ENCODE measurements at regions of chr10 and their contacts with region 1.

Region 1: DNA sequence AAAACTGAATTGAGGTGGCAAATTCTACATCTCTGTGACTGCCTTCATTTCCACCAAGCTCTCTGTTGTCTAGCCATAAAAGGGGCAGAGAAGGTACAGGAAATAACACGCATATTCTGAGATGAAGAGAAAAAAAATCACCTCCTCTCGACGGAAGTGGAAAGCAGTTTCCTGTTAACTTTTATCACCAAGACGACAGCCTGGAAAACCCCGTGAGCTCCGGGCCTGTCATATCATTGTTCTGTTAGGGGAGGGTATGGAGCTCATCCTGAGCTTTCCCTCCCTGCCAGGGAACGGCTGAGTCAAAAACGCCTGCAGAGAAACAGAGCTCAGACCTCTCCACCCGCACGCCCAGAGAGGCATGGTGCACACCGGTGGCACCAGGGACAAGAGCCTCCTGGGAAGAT is 200.3 kb downstream of the PRPF18 start:
- DNase-seq: no peak
- ATAC-seq: no peak

Region 2: GRCh38 chr10:13865758-13866491 is 78.9 kb after region 1 on chr10:
- intact Hi-C with region 1: no loop called
- DNase-seq: no peak
- ATAC-seq: no peak

Region 3: DNA sequence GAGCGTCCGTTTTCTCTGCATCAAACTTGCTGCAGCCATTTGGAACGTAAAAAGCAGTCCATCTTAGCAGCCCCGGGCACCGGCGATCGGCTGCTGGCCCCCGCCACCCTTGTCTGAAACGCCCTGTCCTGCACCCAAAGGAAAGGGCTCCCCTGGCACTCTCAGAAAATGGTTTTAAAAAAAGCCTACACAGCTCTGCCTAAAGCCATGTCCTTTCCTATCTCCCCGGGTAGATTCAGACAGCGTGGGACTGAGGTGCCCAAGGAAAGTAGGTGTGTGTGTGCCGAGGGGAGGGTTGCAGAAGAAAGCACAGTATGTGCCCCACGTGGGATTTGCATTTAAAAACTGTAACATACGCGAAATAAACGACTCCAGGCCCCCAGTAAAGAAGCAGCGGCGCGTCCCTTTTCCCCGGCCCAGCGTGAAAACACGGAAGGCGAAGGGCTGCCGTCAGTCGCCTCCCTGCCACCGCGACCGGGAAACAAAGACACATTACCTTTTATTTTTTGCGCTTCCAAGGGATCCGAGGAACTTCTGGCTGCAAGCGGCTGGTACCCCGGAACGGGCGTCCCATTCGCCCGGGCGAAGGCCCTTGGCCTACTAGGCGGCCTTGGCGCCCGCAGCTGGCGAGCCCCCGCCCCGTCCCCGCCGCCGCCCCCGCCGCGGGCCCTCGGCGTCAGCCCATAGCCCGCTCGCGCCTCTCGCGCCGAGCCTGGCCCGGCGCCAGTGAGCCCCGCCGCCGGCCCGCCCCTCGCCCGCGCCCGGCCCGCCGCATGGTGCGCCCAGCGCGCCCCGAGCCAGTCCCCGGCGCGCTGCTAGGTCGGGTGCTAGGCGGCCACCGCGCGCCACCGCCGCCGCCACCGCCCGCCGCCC is 104.3 kb after region 1 on chr10:
- intact Hi-C with region 1: loop called (anchors 1 kb)
- DNase-seq: no peak
- ATAC-seq: peak; percentile 60

Region 4: GRCh38 chr10:13990946-13991345 is 203.9 kb after region 1 on chr10:
- intact Hi-C with region 1: loop called (anchors 5 kb)
- DNase-seq: peak; percentile 78
- ATAC-seq: peak; percentile 20

Region 5: DNA sequence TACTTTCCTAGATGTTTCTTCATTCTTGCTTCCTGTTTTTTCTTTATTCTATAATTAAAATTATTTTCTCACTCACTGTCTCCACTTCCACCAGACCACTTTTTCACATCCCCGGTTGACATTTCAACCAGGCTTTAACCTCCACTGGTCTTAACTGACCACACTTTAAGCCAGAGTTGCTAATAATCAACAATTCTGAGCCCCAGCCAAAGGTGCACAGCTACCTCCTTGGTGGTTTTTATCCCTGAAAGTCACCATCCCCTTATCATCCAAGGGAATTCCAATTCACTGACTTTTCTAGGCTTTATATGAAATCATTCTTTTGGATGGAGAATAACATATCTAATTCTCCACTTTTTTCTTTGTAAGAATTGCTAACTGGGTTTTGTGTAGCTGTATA is 404.9 kb after region 1 on chr10:
- intact Hi-C with region 1: loop called (anchors 10 kb)
- DNase-seq: no peak
- ATAC-seq: no peak

Measured in Right ventricle myocardium inferior (tissue), 1 donor.